PC-9 (cell line): ENCODE measurements at regions of chr1 and their contacts with region 1.

Region 1: GRCh38 chr1:155244368-155245162 is 10.7 kb downstream of the ENTREP3 start:
- DNase-seq: peak; percentile 94 to 96
- H3K4me3 ChIP-seq: peak overlapping the region; percentile 75
- H3K27ac ChIP-seq: peak overlapping the region; percentile 72
- H3K4me1 ChIP-seq: peaks cover 26% of the 10 kb centered on the region
- H3K27me3 ChIP-seq: no peaks in the 10 kb centered on the region
- CTCF ChIP-seq: peak; percentile 91

Region 2: GRCh38 chr1:155172732-155173477 is 71.7 kb before region 1 on chr1 and contains the start of gene KRTCAP2:
- CTCF ChIA-PET with region 1: interaction called, 3 read pairs
- POLR2A ChIA-PET with region 1: no interaction called
- intact Hi-C with region 1: loop called (anchors 1 kb)
- DNase-seq: peak; percentile 89 to 93
- H3K4me3 ChIP-seq: peak within 1 kb of the TSS; percentile 89
- H3K27ac ChIP-seq: peak within 1 kb of the TSS; percentile 59
- H3K4me1 ChIP-seq: peaks cover 30% of the 10 kb centered on the region
- H3K27me3 ChIP-seq: no peaks in the 10 kb centered on the region
- CTCF ChIP-seq: peak; percentile 94
- total RNA-seq, gene KRTCAP2: 112 and 156 TPM in 2 replicates

Region 3: DNA sequence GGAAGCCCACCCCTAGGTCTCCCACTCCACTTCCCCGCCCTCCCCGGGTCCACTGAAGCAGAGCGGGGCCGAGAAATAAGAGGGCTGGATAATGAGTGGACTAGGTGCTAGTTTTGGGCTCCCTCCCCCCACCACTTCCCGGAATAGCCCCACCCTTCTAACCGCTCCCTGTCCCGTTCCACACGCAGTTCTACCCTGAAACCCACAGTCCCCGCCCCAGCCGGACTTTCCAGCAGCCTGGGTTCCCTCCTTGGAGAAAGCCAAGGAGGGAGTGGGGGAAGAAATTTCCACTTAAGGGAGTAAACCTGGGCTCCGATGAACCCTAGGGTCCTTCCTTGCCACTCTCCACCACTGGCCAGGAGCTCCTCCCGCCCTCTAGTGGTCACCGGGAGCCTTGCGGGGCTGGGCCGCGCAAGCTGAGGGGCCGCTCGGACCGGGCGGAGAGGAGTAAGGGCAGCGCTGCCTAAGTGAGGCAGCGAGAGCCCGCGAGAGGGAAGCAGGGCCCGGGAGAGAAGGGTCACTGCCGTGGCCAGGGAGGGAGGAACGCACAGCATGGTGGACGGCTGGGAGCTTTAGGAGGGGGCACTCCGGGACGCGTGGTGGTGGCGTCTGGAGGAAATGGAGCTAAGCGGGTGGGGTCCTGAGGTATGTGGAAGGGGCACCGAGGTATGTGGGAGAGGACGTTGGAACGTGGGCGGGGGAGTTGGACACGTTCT is 51.1 kb before region 1 on chr1:
- CTCF ChIA-PET with region 1: no interaction called
- POLR2A ChIA-PET with region 1: interaction called, 12 read pairs
- intact Hi-C with region 1: no loop called
- DNase-seq: peak; percentile 79 to 96
- H3K4me3 ChIP-seq: peak overlapping the region; percentile 73
- H3K27ac ChIP-seq: peak overlapping the region; percentile 59
- H3K4me1 ChIP-seq: peaks cover 14% of the 10 kb centered on the region
- H3K27me3 ChIP-seq: no peaks in the 10 kb centered on the region
- CTCF ChIP-seq: peak; percentile 97

Region 4: DNA sequence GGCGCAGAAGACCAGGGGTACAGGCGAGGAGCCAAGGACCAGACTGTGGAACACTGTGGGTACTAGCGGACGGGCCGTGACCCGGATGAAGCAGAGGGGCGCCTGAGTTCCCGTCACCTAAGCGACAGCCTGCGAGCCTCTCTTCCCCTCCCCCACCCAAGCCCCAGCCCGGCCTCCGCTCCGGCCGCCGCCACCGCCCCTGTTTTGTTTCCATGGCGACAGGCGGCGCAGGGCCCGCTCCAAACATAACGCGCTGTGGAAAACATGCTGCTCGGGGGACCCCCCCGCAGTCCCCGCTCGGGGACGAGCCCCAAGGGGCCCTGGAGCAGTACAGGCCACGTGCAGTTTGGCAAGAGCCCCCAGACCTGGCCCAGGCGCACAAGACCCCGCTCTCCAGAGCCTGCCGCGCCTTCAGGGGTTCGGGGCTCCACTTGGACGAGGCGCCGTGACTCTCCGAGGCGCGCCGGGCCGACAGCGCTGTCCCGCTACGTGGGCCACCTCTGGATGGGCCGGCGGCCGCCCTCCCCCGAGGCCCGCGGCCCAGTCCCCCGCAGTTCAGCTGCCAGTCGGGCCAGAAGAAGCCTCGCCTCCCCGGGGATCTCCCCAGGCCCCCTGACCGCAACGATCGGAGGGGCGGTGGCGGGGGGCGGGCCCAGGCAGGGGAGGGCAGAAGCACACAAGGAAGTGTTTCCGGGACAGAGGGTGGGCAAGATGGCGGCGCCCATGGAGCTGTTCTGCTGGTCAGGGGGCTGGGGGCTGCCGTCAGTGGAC is 35.8 kb before region 1 on chr1 and contains the start of gene MTX1:
- CTCF ChIA-PET with region 1: no interaction called
- POLR2A ChIA-PET with region 1: no interaction called
- intact Hi-C with region 1: loop called (anchors 1 kb)
- DNase-seq: peak; percentile 60 to 85
- H3K4me3 ChIP-seq: peak within 1 kb of the TSS; percentile 78
- H3K27ac ChIP-seq: peak within 1 kb of the TSS; percentile 74
- H3K4me1 ChIP-seq: peaks cover 26% of the 10 kb centered on the region
- H3K27me3 ChIP-seq: no peaks in the 10 kb centered on the region
- CTCF ChIP-seq: no peak
- total RNA-seq, gene MTX1: 56.1 and 68.9 TPM in 2 replicates